ENCODE measurements at regions of chr14 and their contacts with region 1.

Region 1: DNA sequence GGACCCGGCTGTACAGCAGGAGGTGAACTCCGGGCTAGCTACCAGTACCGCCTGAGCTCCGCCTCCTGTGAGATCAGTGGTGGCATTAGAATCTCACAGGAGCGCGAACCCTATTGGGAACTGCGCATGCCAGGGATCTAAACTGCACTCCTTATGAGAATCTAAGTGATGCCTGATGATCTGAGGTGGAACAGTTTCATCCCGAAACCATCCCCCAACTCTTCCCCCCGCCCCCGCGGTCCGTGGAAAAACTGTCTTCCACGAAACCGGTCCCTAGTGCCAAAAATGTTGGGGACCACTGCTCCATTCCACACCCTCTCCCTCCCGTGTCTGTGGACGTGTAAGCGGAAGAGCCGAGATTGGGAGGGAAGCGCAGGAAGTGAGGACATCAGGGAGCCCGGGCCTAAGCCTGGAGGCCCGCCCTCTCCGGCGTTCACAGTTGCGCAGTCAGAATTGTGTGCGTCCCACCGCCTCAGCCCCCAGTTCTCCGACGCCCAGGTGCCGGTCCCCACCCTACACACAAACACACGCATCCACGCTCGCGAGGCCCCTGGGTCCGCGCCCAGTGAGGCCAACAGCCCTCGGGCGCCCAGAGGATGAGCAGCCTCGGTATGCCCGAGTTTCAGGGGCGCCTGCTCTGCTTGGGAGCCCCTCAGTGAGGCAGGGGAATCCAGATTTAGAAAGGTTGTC is 1.8 kb upstream of the RNASE4 start:
- DNase-seq: peak; percentile 84
- ATAC-seq: peak; percentile 81
- H3K4me3 ChIP-seq: peak overlapping the region; percentile 81 to 97
- H3K27ac ChIP-seq: peak overlapping the region; percentile 96
- H3K4me1 ChIP-seq: peaks cover 3% of the 10 kb centered on the region
- H3K27me3 ChIP-seq: no peaks in the 10 kb centered on the region
- CTCF ChIP-seq: no peak

Region 2: GRCh38 chr14:20632682-20633428 is 49.7 kb before region 1 on chr14:
- CTCF ChIA-PET with region 1: no interaction called
- POLR2A ChIA-PET with region 1: no interaction called
- in situ Hi-C with region 1: no loop called
- intact Hi-C with region 1: loop called (anchors 2 kb)
- DNase-seq: peak; percentile 94
- ATAC-seq: peak; percentile 88
- H3K4me3 ChIP-seq: peak overlapping the region; percentile 56 to 86
- H3K27ac ChIP-seq: peak overlapping the region; percentile 34; the same call in 1 of the 2 replicates
- H3K4me1 ChIP-seq: peaks cover 5% of the 10 kb centered on the region
- H3K27me3 ChIP-seq: peaks cover 2% of the 10 kb centered on the region; the same call in 1 of the 2 replicates
- CTCF ChIP-seq: no peak

Measured in Panc1 (cell line).